Body of pancreas (tissue), 4 donors: ENCODE measurements at regions of chr5 and their contacts with region 1.

Region 1: GRCh38 chr5:112419986-112420864 is 1.1 kb upstream of the EPB41L4A start:
- DNase-seq: peak; percentile 82 to 91 (median 84)
- ATAC-seq: peak; percentile 90
- H3K4me3 ChIP-seq: peak overlapping the region; percentile 78 to 79
- H3K27ac ChIP-seq: peak overlapping the region; percentile 37 to 89 (median 83)
- H3K4me1 ChIP-seq: peaks cover 18% of the 10 kb centered on the region
- H3K27me3 ChIP-seq: no peaks in the 10 kb centered on the region
- CTCF ChIP-seq: peak; percentile 75 to 97 (median 86)
- POLR2A ChIP-seq: no peak

Region 2: GRCh38 chr5:112210430-112211005 is 209.7 kb before region 1 on chr5:
- intact Hi-C with region 1: loop called (anchors 10 kb)
- DNase-seq: peak; percentile 41 to 72 (median 60)
- ATAC-seq: peak; percentile 59
- H3K4me3 ChIP-seq: no peak overlapping the region
- H3K27ac ChIP-seq: no peak overlapping the region
- H3K4me1 ChIP-seq: no peaks in the 10 kb centered on the region
- H3K27me3 ChIP-seq: no peaks in the 10 kb centered on the region
- CTCF ChIP-seq: peak; percentile 15 to 80 (median 57)
- POLR2A ChIP-seq: no peak

Region 3: DNA sequence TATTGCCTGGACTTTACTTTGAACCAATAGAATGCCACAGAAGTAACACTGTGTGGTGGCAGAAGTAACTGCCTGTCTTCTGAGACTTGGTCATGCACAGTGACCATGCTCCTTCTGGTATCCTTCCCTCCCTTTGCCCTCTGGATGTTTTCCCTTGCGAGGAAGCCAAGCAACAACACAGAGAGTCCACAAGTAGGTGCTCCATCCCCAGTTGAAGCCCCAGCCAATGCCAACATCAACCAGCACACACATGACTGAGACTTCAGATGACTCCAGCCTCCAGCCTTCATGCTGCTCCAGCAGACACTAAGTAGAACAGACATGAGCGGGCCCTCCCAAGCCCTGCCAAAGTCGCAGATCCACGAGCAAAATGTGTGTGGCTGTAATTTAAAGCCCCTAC is 130.8 kb before region 1 on chr5:
- intact Hi-C with region 1: no loop called
- DNase-seq: no peak
- ATAC-seq: no peak
- H3K4me3 ChIP-seq: no peak overlapping the region
- H3K27ac ChIP-seq: no peak overlapping the region
- H3K4me1 ChIP-seq: peaks cover 4% of the 10 kb centered on the region
- H3K27me3 ChIP-seq: no peaks in the 10 kb centered on the region
- CTCF ChIP-seq: no peak
- POLR2A ChIP-seq: no peak